HCT116 (cell line): ENCODE measurements at regions of chrX and their contacts with region 1.

Region 1: DNA sequence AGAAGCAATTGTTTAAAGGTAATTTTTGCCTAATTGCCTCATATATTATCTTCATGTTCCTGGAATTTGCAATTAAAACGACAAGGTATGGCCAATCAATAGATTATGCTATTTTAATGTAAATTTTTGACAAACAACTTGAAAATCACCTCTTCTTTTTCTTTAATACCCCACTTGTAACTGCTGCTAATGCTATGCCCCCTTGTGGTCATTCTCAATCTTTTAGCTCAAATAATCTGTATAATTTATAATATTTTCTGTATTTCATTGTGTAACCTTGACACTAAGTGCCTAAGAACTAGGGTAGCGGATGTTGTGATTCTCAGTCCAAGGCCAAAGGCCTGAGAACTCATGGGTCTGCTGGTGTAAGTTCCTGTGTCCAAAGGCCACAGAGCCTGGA is 831.7 kb upstream of the POU3F4 start:
- DNase-seq: peak; percentile 15
- ATAC-seq: no peak
- H3K4me3 ChIP-seq: no peak overlapping the region
- H3K27ac ChIP-seq: no peak overlapping the region
- H3K4me1 ChIP-seq: no peaks in the 10 kb centered on the region
- H3K27me3 ChIP-seq: no peaks in the 10 kb centered on the region
- CTCF ChIP-seq: peak in 2 of 3 experiments; percentile 24 to 37; a peak in 3 of 6 replicates
- POLR2A ChIP-seq: no peak
- RAD21 ChIP-seq: peak; percentile 35; the same call in 1 of the 2 replicates

Region 2: GRCh38 chrX:82230009-82230408 is 446.4 kb before region 1 on chrX:
- CTCF ChIA-PET with region 1: interaction called, 9 read pairs
- POLR2A ChIA-PET with region 1: no interaction called
- RAD21 ChIA-PET with region 1: no interaction called
- intact Hi-C with region 1: loop called (anchors 5 kb)
- DNase-seq: no peak
- ATAC-seq: peak; percentile 36; the same call in 1 of the 2 replicates
- H3K4me3 ChIP-seq: no peak overlapping the region
- H3K27ac ChIP-seq: no peak overlapping the region
- H3K4me1 ChIP-seq: no peaks in the 10 kb centered on the region
- H3K27me3 ChIP-seq: no peaks in the 10 kb centered on the region
- CTCF ChIP-seq: 0 out of 6 replicates have a peak, but pooled peaks of 1 of the 3 experiments have one; percentile 8
- POLR2A ChIP-seq: no peak
- RAD21 ChIP-seq: peak; percentile 14; the same call in 1 of the 2 replicates